Panc1 (cell line): ENCODE measurements at regions of chr14 and their contacts with region 1.

Region 1: DNA sequence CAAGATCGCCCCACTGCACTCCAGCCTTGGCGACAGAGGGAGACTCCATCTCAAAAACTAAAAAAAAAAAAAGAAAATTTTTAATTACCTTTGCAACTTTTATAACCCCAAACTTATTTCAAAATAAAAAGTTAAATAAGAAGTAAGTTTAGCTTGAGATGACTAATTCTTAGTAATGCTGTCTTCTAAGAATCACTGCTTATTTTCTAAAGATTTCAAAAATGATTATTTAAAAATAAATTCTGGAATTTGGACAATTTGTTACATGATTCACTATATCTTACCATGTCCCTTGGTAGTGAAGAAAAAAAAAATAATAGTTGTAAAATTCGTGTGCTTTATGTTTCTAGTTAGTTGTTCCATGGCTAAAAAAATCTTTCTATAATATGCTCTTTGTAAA is 11.6 kb upstream of the HECTD1 start:
- DNase-seq: no peak
- ATAC-seq: no peak
- H3K4me3 ChIP-seq: no peak overlapping the region
- H3K27ac ChIP-seq: no peak overlapping the region
- H3K4me1 ChIP-seq: no peaks in the 10 kb centered on the region
- H3K27me3 ChIP-seq: no peaks in the 10 kb centered on the region
- CTCF ChIP-seq: no peak

Region 2: GRCh38 chr14:31070431-31070830 is 148.7 kb before region 1 on chr14:
- CTCF ChIA-PET with region 1: no interaction called
- POLR2A ChIA-PET with region 1: no interaction called
- in situ Hi-C with region 1: no loop called
- intact Hi-C with region 1: no loop called
- DNase-seq: no peak
- ATAC-seq: no peak
- H3K4me3 ChIP-seq: no peak overlapping the region
- H3K27ac ChIP-seq: no peak overlapping the region
- H3K4me1 ChIP-seq: no peaks in the 10 kb centered on the region
- H3K27me3 ChIP-seq: no peaks in the 10 kb centered on the region
- CTCF ChIP-seq: no peak

Region 3: DNA sequence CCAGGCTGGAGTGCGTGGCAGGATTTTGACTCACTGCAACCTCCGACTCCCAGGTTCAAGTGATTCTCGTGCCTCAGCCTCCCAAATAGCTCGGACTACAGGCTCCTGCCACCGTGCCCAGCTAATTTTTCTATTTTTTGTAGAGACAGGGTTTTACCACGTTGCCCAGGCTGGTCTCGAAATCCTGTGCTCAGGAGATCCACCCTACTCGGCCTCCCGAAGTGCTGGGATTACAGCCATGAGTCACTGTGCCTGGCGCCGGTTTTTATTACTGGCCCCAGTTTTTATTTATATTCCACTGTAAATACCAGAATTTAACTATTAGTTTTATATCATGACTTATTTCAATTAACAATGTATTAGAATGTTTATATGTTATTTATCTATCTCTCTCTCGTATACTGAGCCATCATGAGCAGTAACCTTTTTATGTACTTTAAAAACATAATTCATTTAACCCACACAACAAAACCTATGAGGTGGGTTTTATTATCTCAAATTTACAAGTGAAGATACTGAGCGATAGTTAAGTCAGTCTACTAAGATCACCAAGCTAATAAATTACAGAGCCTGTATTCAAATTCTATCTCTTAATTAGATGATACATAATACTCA is 59.4 kb before region 1 on chr14:
- CTCF ChIA-PET with region 1: no interaction called
- POLR2A ChIA-PET with region 1: no interaction called
- in situ Hi-C with region 1: no loop called
- intact Hi-C with region 1: no loop called
- DNase-seq: no peak
- ATAC-seq: no peak
- H3K4me3 ChIP-seq: no peak overlapping the region
- H3K27ac ChIP-seq: no peak overlapping the region
- H3K4me1 ChIP-seq: no peaks in the 10 kb centered on the region
- H3K27me3 ChIP-seq: no peaks in the 10 kb centered on the region
- CTCF ChIP-seq: no peak

Region 4: DNA sequence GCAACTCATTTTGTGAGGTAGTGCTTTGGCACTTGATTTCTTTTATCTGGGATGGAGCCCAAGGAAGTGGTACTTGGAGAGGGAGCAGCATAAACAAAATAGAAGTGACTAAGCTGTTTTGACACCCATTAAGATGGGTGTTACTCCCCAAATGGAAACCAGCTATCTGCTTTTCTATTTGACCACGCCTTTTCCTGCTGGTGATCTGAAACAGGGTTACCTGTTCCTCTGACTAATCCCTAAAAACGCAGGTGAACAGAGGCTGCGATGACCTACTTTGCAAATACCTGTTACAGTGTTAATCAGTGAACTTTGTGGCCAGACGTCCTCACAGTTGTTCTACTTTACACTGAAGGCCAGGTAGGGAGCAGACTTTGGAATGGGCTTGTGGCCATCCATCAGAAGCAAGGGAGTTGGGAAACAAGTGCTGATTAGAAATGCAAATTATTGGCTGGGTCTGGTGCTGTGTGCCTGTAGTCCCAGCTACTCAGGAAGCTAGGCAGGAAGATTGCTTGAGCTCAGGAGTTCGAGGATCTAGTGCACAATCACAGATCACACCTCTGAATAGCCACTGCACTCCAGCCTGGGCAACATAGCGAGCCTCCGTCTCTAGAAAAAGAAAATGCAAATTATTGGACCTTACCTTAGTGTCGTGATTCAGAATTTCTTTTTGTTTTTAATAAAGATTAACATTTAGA is 46.7 kb after region 1 on chr14:
- CTCF ChIA-PET with region 1: no interaction called
- POLR2A ChIA-PET with region 1: interaction called, 10 read pairs
- in situ Hi-C with region 1: no loop called
- intact Hi-C with region 1: no loop called
- DNase-seq: no peak
- ATAC-seq: no peak
- H3K4me3 ChIP-seq: no peak overlapping the region
- H3K27ac ChIP-seq: no peak overlapping the region
- H3K4me1 ChIP-seq: no peaks in the 10 kb centered on the region; the same call in 1 of the 2 replicates
- H3K27me3 ChIP-seq: no peaks in the 10 kb centered on the region
- CTCF ChIP-seq: no peak